Right ventricle myocardium inferior (tissue), 1 donor: ENCODE measurements at regions of chr4 and their contacts with region 1.

Region 1: DNA sequence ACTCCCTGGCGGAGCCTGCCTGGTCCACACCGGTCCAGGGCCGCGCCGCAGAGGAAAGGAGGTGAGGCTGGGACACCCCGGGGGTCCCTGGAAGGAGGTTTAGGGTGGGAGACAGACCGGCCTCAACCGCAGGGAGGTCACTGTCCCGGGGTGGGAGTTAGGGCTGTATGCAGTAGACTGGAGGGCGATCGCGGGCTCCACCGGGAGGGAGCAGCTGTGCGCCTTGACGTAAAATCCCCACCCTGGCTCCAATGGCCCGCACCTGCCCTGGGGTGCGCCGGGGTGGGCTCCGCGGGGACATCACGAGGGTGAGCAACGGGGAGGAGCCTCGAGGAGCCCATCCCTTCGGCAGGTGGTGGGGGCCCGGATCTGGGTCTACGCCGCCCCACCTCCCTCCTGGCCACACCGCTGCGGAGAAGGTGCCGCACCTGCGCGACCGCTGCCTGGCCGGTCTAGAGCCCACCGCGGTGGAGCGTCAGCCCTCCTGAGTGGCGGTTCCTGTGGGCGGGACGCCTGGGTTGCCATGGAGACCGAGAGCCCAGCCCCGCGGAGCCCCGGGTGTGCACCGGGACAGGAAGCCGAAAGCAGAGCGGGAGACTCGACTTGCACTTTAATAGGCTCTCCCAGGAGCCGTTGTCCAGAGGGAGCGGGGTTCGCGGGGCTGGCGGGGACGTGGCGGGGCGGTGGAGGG is 105.1 kb downstream of the ADRA2C start:
- DNase-seq: no peak
- ATAC-seq: no peak

Region 2: DNA sequence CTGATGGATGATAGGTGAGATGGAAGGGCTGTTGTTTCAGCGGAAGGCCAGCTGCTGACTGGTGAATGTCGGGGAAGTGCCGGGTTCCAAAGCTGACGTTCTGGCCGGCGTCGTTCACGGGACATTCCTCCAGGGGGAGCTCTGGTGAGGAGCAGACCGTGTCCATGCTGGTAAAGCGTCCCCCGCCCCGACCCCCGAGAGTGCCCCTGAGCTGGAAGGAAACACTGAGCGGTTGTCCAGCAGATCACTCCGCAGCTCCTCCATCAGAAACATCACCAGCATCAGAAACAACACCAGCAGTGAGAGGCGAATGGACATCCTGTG is 123.8 kb before region 1 on chr4:
- intact Hi-C with region 1: no loop called
- DNase-seq: no peak
- ATAC-seq: no peak

Region 3: GRCh38 chr4:3773552-3774001 is 97.7 kb before region 1 on chr4:
- intact Hi-C with region 1: loop called (anchors 10 kb)
- DNase-seq: no peak
- ATAC-seq: no peak